Activated naive CD4-positive, alpha-beta T cell treated with anti-CD3 and anti-CD28 coated beads for 36 hours (primary cell): ENCODE measurements at regions of chrX and their contacts with region 1.

Region 1: GRCh38 chrX:149470955-149471354 is 34.2 kb downstream of the IDS start:
- DNase-seq: peak; percentile 67
- H3K4me3 Mint-ChIP-seq: no peak overlapping the region
- H3K27ac Mint-ChIP-seq: no peak overlapping the region
- H3K4me1 Mint-ChIP-seq: no peaks in the 10 kb centered on the region
- H3K27me3 Mint-ChIP-seq: no peaks in the 10 kb centered on the region

Region 2: DNA sequence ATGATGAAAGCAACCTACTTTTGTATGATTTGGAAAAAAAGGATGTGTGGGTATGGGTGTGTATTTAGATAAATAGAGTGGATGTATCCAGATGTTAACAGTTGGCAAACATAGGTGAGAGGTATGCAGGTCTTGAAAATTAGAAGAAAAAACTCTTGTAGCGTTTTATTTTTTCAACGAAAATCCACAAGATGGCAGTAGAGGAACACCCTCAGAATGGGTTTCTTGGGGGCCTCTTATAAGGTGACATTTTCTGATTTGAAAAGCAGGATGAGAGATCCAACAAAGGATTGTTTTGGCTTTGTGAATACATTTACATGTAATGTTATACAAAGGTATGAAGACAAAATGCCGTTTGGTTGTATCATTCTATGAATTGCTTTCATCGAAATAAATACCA is 1421.5 kb before region 1 on chrX:
- CTCF ChIA-PET with region 1: interaction called, 13 read pairs
- intact Hi-C with region 1: loop called (anchors 1 kb)
- DNase-seq: no peak
- H3K4me3 Mint-ChIP-seq: no peak overlapping the region
- H3K27ac Mint-ChIP-seq: no peak overlapping the region
- H3K4me1 Mint-ChIP-seq: no peaks in the 10 kb centered on the region
- H3K27me3 Mint-ChIP-seq: no peaks in the 10 kb centered on the region

Region 3: DNA sequence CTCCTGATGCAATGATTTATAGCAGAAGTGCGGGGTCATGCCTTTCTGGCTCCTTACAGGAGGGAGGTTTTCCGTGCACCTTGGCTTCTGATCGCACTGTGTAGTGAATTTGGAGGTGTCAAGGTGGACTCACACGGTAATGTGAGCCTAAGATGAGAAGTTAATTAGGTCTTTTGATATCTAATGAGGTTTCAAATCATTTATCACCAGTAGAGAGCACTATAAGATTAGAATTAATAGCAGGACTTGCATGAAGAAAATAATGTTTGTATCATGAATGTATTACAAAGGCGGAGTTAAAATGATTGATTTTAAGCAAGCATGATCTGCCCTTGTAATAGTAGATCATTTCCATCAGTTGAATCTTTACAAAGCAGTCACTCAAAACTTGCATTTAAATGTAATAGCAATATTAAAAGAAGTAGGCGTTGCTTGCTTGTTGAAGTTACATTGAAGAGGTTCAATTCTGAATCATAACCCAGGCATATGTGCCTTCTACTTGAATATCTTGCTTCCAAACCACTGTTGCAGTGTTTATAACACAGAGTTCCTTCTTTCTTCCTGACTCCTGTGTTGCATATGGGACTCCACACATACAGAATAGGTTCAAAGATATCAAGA is 1337.7 kb before region 1 on chrX:
- CTCF ChIA-PET with region 1: no interaction called
- intact Hi-C with region 1: loop called (anchors 5 kb)
- DNase-seq: no peak
- H3K4me3 Mint-ChIP-seq: no peak overlapping the region
- H3K27ac Mint-ChIP-seq: no peak overlapping the region
- H3K4me1 Mint-ChIP-seq: no peaks in the 10 kb centered on the region
- H3K27me3 Mint-ChIP-seq: no peaks in the 10 kb centered on the region

Region 4: GRCh38 chrX:149504915-149505651 is 34.1 kb after region 1 on chrX and contains the start of gene IDS:
- CTCF ChIA-PET with region 1: no interaction called
- intact Hi-C with region 1: no loop called
- DNase-seq: peak; percentile 89
- H3K4me3 Mint-ChIP-seq: peak within 1 kb of the TSS; percentile 86
- H3K27ac Mint-ChIP-seq: peak within 1 kb of the TSS; percentile 93
- H3K4me1 Mint-ChIP-seq: peaks cover 26% of the 10 kb centered on the region
- H3K27me3 Mint-ChIP-seq: no peaks in the 10 kb centered on the region
- total RNA-seq, gene IDS: 39.9 to 43.1 TPM